Sigmoid colon (tissue), 7 donors: ENCODE measurements at regions of chr10 and their contacts with region 1.

Region 1: GRCh38 chr10:68560186-68560942 is at the start of gene TET1:
- DNase-seq: peak; percentile 79
- H3K4me3 ChIP-seq: peak within 1 kb of the TSS; percentile 67 to 78 (median 75)
- H3K27ac ChIP-seq: peak within 1 kb of the TSS; percentile 37 to 63 (median 55)
- H3K4me1 ChIP-seq: peaks cover 0 to 33% (median 24%) of the 10 kb centered on the region in 4 donors
- H3K27me3 ChIP-seq: peaks cover 0 to 13% (median 3%) of the 10 kb centered on the region in 3 donors
- CTCF ChIP-seq: no peak
- EP300 ChIP-seq: no peak
- POLR2A ChIP-seq: peak in 1 of 2 donors; percentile 32
- total RNA-seq, gene TET1: 6.4 to 8.9 (median 6.9) TPM

Region 2: DNA sequence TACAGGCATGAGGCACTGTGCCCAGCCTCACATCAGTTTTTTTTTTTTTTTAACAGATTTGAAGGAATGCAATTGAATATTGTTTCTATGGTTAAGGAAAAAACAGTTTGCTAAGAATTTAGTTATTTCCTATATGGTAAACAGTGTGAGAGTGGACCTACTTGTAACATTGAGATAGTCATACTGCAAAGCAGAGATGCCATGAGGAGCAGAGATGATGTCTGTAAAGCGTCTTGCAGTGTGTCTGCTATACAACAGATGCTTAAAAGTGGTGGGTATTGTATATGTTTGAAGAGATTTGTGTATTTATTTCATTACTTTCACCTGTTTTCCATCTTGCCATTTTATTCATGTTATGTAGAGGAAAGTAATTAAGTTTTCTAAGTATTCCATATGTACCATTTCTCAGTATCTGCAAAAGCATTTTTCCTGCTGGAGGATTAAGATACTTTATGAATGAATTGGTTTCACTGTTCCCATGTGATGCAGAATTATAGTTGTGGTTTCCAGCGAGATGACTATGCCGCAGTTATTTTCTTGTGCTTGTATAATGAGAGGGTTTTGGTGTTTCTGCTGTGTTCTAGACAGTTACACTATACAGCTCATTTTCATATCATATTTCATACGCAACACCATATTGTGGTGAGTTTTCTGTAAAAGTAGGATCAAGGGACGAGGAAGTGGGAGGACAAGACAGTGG is 26.4 kb after region 1 on chr10:
- intact Hi-C with region 1: no loop called
- DNase-seq: no peak
- H3K4me3 ChIP-seq: no peak overlapping the region
- H3K27ac ChIP-seq: no peak overlapping the region
- H3K4me1 ChIP-seq: no peaks in the 10 kb centered on the region
- H3K27me3 ChIP-seq: no peaks in the 10 kb centered on the region
- CTCF ChIP-seq: no peak
- EP300 ChIP-seq: no peak
- POLR2A ChIP-seq: no peak

Region 3: DNA sequence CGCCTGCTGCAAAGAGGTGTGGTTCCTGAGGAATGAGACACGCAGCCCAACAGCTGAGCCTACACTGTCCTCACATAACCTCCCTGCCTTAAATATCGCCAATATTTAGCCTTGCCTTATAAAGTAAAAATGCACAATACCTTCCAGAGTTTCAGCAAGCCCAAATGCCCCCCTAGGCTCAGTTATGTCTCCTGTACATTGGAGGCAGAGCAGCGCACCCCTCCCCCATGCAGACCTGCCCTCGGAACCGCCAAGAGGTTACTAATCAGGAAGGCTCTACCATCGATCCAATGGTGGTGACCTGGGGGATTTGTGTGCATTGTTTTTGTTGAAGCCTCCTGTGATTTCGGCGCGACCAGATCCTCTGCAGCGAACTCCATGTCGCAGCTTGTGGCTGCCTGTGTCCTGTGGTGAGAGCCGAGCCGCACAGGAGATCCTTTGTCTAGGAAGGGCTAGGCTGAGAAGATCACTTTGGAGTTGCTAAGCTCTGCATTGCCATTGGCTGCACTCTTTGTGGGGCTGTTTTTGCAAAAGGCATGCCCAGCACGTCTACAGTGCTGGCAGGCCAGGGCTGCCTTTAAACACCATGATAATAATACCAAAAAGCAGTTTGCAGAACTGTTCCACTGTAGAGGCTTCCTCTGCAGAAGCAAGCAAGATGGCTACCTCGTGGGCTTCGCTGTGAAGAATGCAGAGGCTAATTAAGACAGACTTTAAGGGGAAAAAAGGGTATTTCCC is 39.8 kb after region 1 on chr10:
- intact Hi-C with region 1: loop called (anchors 2 kb)
- DNase-seq: peak; percentile 82
- H3K4me3 ChIP-seq: peak overlapping the region; percentile 35 to 51 (median 48)
- H3K27ac ChIP-seq: peak overlapping the region; percentile 72 to 83 (median 80)
- H3K4me1 ChIP-seq: peaks cover 0 to 43% (median 42%) of the 10 kb centered on the region in 4 donors
- H3K27me3 ChIP-seq: no peaks in the 10 kb centered on the region
- CTCF ChIP-seq: no peak
- EP300 ChIP-seq: no peak
- POLR2A ChIP-seq: no peak

Region 4: GRCh38 chr10:68636335-68636734 is 76.0 kb after region 1 on chr10:
- intact Hi-C with region 1: no loop called
- DNase-seq: no peak
- H3K4me3 ChIP-seq: no peak overlapping the region
- H3K27ac ChIP-seq: no peak overlapping the region
- H3K4me1 ChIP-seq: no peaks in the 10 kb centered on the region
- H3K27me3 ChIP-seq: no peaks in the 10 kb centered on the region
- CTCF ChIP-seq: no peak
- EP300 ChIP-seq: no peak
- POLR2A ChIP-seq: no peak

Region 5: DNA sequence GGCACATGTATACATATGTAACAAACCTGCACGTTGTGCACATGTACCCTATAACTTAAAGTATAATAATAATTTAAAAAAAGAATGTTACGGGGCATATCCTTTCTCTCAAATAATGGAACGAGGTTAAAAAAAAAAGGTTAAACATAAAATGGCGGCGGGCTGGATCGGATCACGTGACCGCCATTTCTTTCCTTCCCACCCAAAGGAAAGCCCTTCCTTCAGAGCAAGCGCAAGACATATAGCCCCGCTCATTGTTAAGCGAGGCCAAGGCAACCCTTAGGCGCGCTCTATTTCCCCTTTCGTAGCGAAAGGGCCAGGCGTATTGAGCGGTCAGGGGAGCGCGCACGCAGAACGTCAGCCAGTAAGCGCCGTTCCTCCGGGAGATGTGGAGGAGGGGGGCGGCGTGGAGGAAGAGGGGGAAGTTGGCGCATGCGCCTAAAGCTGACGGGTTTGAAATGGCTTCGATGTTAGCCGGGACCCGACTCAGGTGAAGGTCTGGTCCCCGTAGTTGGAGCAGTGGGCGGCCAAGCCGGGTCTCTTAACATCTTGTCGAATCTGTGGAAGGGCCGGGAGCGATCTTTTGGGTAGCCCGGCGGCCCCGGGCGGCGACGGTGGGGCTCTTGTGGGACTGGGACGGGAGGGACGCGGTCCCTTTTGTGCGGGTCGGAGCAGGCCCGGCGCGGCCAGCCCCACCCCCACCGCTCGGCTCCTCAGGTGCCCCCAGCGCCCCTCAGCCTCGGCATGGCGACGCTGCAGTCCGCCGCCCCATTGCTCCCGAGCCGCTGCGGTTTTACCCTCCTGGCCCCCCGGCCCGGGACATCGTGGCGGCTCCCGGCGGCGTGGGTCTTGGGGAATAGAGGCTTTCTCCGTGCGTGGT is 160.7 kb after region 1 on chr10 and contains the start of gene CCAR1:
- intact Hi-C with region 1: loop called (anchors 5 kb)
- DNase-seq: peak; percentile 98
- H3K4me3 ChIP-seq: peak within 1 kb of the TSS; percentile 83 to 99 (median 84)
- H3K27ac ChIP-seq: peak within 1 kb of the TSS; percentile 92 to 97 (median 95)
- H3K4me1 ChIP-seq: peaks cover 0 to 11% (median 9%) of the 10 kb centered on the region in 4 donors
- H3K27me3 ChIP-seq: no peaks in the 10 kb centered on the region
- CTCF ChIP-seq: no peak
- EP300 ChIP-seq: peak in 1 of 4 donors; percentile 15
- POLR2A ChIP-seq: peak; percentile 38 to 47
- total RNA-seq, gene CCAR1: 37.6 to 69.2 (median 45.8) TPM

Region 6: GRCh38 chr10:69146759-69147158 is 586.4 kb after region 1 on chr10:
- intact Hi-C with region 1: no loop called
- DNase-seq: no peak
- H3K4me3 ChIP-seq: no peak overlapping the region
- H3K27ac ChIP-seq: no peak overlapping the region
- H3K4me1 ChIP-seq: peaks cover 0 to 6% (median 0%) of the 10 kb centered on the region in 4 donors
- H3K27me3 ChIP-seq: no peaks in the 10 kb centered on the region
- CTCF ChIP-seq: no peak
- EP300 ChIP-seq: no peak
- POLR2A ChIP-seq: no peak